ENCODE measurements at regions of chr6 and their contacts with region 1.

Region 1: DNA sequence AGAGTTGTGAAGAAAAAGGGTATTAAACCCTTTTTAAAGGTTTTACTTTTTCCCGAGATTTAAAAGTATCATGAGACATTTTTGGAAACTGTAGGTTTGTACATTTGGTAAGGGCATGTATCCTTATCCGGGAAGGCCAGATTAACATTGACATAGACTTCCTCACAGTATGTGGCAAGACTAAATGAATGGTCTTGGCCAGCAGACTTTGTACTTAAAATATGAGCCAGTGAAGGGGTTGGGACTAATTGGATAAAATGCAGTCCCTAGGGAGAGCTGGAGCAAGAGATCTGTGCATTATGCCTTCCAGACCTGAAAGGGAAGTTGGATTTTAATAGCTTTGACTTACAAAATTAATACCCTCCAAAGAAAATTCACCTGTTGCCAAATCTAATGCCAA is 60.4 kb upstream of the CCN2 start:
- DNase-seq: no peak
- ATAC-seq: peak in 4 of 8 donors; percentile 49 to 87 (median 60)
- H3K4me3 ChIP-seq: no peak overlapping the region
- H3K27ac ChIP-seq: peak overlapping the region in 3 of 10 donors; percentile 28 to 64 (median 41)
- H3K4me1 ChIP-seq: peaks cover 0 to 8% (median 0%) of the 10 kb centered on the region in 9 donors
- H3K27me3 ChIP-seq: no peaks in the 10 kb centered on the region
- CTCF ChIP-seq: no peak

Region 2: GRCh38 chr6:131640100-131640499 is 371.5 kb before region 1 on chr6:
- intact Hi-C with region 1: no loop called
- DNase-seq: no peak
- ATAC-seq: no peak
- H3K4me3 ChIP-seq: no peak overlapping the region
- H3K27ac ChIP-seq: no peak overlapping the region
- H3K4me1 ChIP-seq: no peaks in the 10 kb centered on the region
- H3K27me3 ChIP-seq: no peaks in the 10 kb centered on the region
- CTCF ChIP-seq: no peak

Region 3: GRCh38 chr6:132041706-132042105 is 30.1 kb after region 1 on chr6:
- intact Hi-C with region 1: no loop called
- DNase-seq: no peak
- ATAC-seq: no peak
- H3K4me3 ChIP-seq: no peak overlapping the region
- H3K27ac ChIP-seq: no peak overlapping the region
- H3K4me1 ChIP-seq: no peaks in the 10 kb centered on the region
- H3K27me3 ChIP-seq: no peaks in the 10 kb centered on the region
- CTCF ChIP-seq: no peak

Region 4: DNA sequence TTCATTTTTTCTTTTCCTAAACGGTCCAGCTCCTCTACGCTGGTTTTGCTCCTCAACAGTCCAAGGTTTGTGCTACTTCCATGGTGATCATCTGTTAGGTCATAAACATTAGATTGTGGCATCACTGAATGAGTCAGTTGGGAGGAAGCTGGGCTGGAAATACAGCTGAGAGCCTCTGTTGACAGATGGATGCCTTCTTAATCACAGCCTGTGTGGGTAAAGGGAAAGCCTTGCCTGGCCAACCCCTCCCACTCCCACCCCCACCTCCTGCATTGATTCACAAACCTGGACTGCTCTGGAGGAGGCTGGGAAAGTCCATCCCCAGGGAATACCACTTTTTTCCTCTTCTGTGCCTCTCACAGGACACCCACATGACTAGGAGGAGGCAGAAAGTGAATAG is 120.2 kb after region 1 on chr6:
- intact Hi-C with region 1: loop called in 1 of 10 experiments (anchors 10 kb)
- DNase-seq: peak; percentile 16 to 61
- ATAC-seq: peak; percentile 60 to 95 (median 86)
- H3K4me3 ChIP-seq: no peak overlapping the region
- H3K27ac ChIP-seq: peak overlapping the region; percentile 75 to 93 (median 84)
- H3K4me1 ChIP-seq: peaks cover 3 to 44% (median 36%) of the 10 kb centered on the region in 9 donors
- H3K27me3 ChIP-seq: no peaks in the 10 kb centered on the region
- CTCF ChIP-seq: no peak

Region 5: GRCh38 chr6:132614554-132614953 is 603.0 kb after region 1 on chr6:
- intact Hi-C with region 1: no loop called
- DNase-seq: no peak
- ATAC-seq: no peak
- H3K4me3 ChIP-seq: peak overlapping the region in 1 of 10 donors; percentile 18
- H3K27ac ChIP-seq: no peak overlapping the region
- H3K4me1 ChIP-seq: no peaks in the 10 kb centered on the region
- H3K27me3 ChIP-seq: peaks cover 0 to 8% (median 0%) of the 10 kb centered on the region in 7 donors
- CTCF ChIP-seq: no peak